Natural killer cell (primary cell): ENCODE measurements at regions of chr12 and their contacts with region 1.

Region 1: DNA sequence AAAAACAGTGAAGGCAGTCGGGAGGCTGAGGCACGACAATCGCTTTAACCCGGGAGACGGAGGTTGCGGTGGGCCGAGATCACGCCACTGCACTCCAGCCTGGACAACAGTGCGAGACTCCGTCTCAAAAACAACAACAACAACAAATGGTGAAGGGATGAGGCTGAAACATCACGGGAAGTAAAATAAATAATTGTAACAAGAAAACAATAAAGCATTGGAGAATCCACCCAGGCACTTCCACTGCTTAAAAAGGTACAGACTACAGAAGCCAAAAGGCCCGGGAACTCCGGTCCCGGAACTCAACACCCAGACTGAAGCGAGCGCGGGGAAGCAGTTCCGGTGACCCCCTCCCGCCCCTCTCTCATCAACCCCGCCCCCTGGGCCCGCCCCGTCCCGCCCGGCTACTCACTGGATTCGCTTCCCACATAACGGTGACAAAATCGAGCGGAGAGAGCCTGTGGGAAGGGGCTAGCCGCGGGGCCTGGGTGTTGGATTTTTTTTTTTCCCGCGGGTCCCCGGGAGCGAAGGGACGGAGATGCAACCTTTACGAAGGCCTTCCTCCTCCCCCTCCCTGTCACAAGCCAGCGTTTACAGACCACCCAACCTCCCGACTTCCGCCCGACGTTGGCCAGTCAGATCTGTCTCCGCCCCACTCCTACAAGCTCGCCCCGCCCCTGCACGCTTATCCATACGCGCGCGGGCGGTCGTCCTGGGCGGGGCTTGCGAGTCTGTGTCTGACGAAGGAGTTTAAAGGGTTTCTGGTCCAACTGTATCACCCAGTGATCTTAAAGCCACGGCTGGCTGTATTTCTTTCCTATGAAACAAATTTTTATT is at the start of gene PARP11:
- DNase-seq: peak; percentile 96 to 99
- ATAC-seq: peak; percentile 95 to 100 (median 96)
- H3K4me3 ChIP-seq: peak within 1 kb of the TSS; percentile 58
- H3K4me3 Mint-ChIP-seq: peak within 1 kb of the TSS; percentile 94
- H3K27ac ChIP-seq: peak within 1 kb of the TSS; percentile 82
- H3K27ac Mint-ChIP-seq: peak within 1 kb of the TSS; percentile 98 to 99
- H3K4me1 ChIP-seq: peaks cover 19% of the 10 kb centered on the region
- H3K4me1 Mint-ChIP-seq: peaks cover 52 to 56% of the 10 kb centered on the region in 2 donors
- H3K27me3 ChIP-seq: no peaks in the 10 kb centered on the region
- H3K27me3 Mint-ChIP-seq: peaks cover 6 to 8% of the 10 kb centered on the region in 2 donors
- CTCF ChIP-seq: no peak
- total RNA-seq, gene PARP11: 18.8 to 27.3 (median 24.7) TPM

Region 2: GRCh38 chr12:3820122-3820521 is 52.9 kb before region 1 on chr12:
- intact Hi-C with region 1: no loop called
- DNase-seq: no peak
- ATAC-seq: no peak
- H3K4me3 ChIP-seq: no peak overlapping the region
- H3K4me3 Mint-ChIP-seq: no peak overlapping the region
- H3K27ac ChIP-seq: no peak overlapping the region
- H3K27ac Mint-ChIP-seq: no peak overlapping the region
- H3K4me1 ChIP-seq: no peaks in the 10 kb centered on the region
- H3K4me1 Mint-ChIP-seq: no peaks in the 10 kb centered on the region
- H3K27me3 ChIP-seq: no peaks in the 10 kb centered on the region
- H3K27me3 Mint-ChIP-seq: no peaks in the 10 kb centered on the region
- CTCF ChIP-seq: no peak

Region 3: GRCh38 chr12:4320853-4321701 is 448.1 kb after region 1 on chr12 and contains the start of gene TIGAR:
- intact Hi-C with region 1: loop called (anchors 1 kb)
- DNase-seq: peak; percentile 93 to 96
- ATAC-seq: peak; percentile 96 to 100 (median 97)
- H3K4me3 ChIP-seq: peak within 1 kb of the TSS; percentile 98
- H3K4me3 Mint-ChIP-seq: peak within 1 kb of the TSS; percentile 95
- H3K27ac ChIP-seq: peak within 1 kb of the TSS; percentile 86
- H3K27ac Mint-ChIP-seq: peak within 1 kb of the TSS; percentile 91 to 95
- H3K4me1 ChIP-seq: peaks cover 22% of the 10 kb centered on the region
- H3K4me1 Mint-ChIP-seq: peaks cover 30 to 33% of the 10 kb centered on the region in 2 donors
- H3K27me3 ChIP-seq: no peaks in the 10 kb centered on the region
- H3K27me3 Mint-ChIP-seq: no peaks in the 10 kb centered on the region
- CTCF ChIP-seq: no peak
- total RNA-seq, gene TIGAR: 6.1 to 7.4 (median 7.3) TPM

Region 4: GRCh38 chr12:4538207-4539160 is 665.5 kb after region 1 on chr12 and contains the start of gene RAD51AP1:
- intact Hi-C with region 1: loop called (anchors 5 kb)
- DNase-seq: peak; percentile 92 to 99
- ATAC-seq: peak; percentile 98 to 99 (median 99)
- H3K4me3 ChIP-seq: peak within 1 kb of the TSS; percentile 58
- H3K4me3 Mint-ChIP-seq: peak within 1 kb of the TSS; percentile 98
- H3K27ac ChIP-seq: peak within 1 kb of the TSS; percentile 96
- H3K27ac Mint-ChIP-seq: peak within 1 kb of the TSS; percentile 94 to 99
- H3K4me1 ChIP-seq: peaks cover 3% of the 10 kb centered on the region
- H3K4me1 Mint-ChIP-seq: peaks cover 22 to 33% of the 10 kb centered on the region in 2 donors
- H3K27me3 ChIP-seq: no peaks in the 10 kb centered on the region
- H3K27me3 Mint-ChIP-seq: no peaks in the 10 kb centered on the region
- CTCF ChIP-seq: no peak
- total RNA-seq, gene RAD51AP1: 3.4 to 5.4 (median 5.2) TPM